ENCODE measurements at regions of chr12 and their contacts with region 1.

Region 1: GRCh38 chr12:56751712-56752598 is at the start of gene PRIM1:
- DNase-seq: peak; percentile 81
- ATAC-seq: peak; percentile 83
- H3K4me3 Mint-ChIP-seq: peak within 1 kb of the TSS; percentile 96
- H3K27ac Mint-ChIP-seq: peak within 1 kb of the TSS; percentile 94
- H3K4me1 Mint-ChIP-seq: peaks cover 43% of the 10 kb centered on the region
- H3K27me3 Mint-ChIP-seq: no peaks in the 10 kb centered on the region
- CTCF ChIP-seq: no peak
- total RNA-seq, gene PRIM1: 15.1 and 16.8 TPM in 2 replicates

Region 2: DNA sequence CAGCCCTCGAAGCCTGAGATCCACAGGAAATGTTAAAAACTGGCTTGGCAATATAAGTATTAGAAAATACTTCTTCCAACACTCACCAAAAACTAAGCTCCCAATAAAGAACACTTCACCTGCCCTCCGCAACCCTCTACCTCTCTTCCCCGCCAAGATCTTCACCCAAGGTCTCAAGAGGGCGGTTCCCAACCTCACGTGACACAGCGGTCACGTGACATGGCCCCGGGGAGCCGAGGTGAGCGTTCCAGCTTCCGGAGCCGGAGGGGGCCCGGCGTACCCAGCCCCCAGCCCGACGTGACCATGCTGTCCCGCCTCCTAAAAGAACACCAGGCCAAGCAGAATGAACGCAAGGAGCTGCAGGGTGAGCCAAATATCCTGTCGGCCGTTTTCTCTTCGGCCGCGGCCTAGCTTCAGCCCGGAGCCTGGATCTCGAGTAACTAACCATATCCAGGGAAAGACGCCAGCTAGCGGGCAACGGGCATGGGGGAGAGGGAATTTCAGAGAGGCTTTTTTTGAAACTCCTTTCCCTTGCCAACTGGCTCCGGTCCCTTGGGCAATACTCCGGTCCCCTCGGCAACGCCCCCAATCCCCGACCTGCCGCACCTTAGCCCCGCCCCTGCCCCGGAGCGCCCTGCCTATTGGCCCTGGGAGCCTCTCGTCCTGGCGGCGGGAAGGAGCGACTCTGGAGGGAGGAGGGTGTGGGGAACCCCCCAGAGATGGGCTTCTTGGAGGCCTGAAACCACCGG is 1035.9 kb before region 1 on chr12 and contains the start of gene BLOC1S1:
- CTCF ChIA-PET with region 1: no interaction called
- POLR2A ChIA-PET with region 1: no interaction called
- intact Hi-C with region 1: no loop called
- DNase-seq: peak; percentile 92
- ATAC-seq: peak; percentile 94
- H3K4me3 Mint-ChIP-seq: peak within 1 kb of the TSS; percentile 92
- H3K27ac Mint-ChIP-seq: peak within 1 kb of the TSS; percentile 91
- H3K4me1 Mint-ChIP-seq: peaks cover 34% of the 10 kb centered on the region
- H3K27me3 Mint-ChIP-seq: peaks cover 2% of the 10 kb centered on the region
- CTCF ChIP-seq: no peak
- total RNA-seq, gene BLOC1S1: 91.0 and 104 TPM in 2 replicates

Region 3: GRCh38 chr12:56630160-56630632 is 121.8 kb before region 1 on chr12 and contains the start of gene BAZ2A:
- CTCF ChIA-PET with region 1: no interaction called
- POLR2A ChIA-PET with region 1: interaction called, 4 read pairs
- intact Hi-C with region 1: loop called (anchors 1 kb)
- DNase-seq: peak; percentile 74
- ATAC-seq: peak; percentile 62
- H3K4me3 Mint-ChIP-seq: peak within 1 kb of the TSS; percentile 96
- H3K27ac Mint-ChIP-seq: peak within 1 kb of the TSS; percentile 88
- H3K4me1 Mint-ChIP-seq: peaks cover 80% of the 10 kb centered on the region
- H3K27me3 Mint-ChIP-seq: no peaks in the 10 kb centered on the region
- CTCF ChIP-seq: no peak
- total RNA-seq, gene BAZ2A: 153 and 192 TPM in 2 replicates

Region 4: DNA sequence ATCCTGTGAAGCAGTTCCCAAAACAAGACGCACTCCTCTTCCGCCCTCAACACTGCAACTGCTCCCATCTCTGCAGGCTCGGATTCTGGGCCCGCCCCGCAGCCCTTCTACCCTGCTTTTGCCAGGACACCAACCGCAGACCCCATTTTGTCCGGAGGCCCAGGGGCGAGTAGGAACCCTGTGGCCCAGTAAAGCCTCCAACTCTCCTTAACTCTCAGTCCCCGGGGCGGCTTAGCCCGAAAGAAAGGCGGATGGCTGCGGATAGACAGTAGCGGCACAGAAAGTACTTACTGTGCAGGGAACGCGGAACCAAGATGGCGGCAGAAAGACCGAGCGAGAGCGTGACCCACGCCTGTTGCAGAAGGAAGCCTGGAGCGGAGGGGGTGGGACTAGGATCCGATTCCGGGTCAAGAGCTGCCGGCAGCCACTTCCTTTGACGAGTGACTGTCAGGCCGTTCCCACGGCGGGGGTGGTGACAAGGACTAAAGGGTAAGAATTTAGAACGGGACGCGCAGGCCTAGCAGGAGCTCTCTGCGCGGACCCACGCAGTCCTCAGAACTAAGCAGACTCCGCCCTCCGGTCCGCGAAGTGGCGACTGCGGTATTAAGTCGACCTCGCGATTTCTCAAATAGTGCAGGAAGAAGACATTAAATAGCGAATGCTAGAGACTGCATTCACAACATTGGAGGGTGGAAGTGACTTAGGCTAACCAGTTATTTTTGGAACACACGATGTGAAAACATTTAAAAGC is 26.8 kb before region 1 on chr12 and contains the start of gene NACA:
- CTCF ChIA-PET with region 1: no interaction called
- POLR2A ChIA-PET with region 1: interaction called, 19 read pairs
- intact Hi-C with region 1: loop called (anchors 1 kb)
- DNase-seq: peak; percentile 90
- ATAC-seq: peak; percentile 95
- H3K4me3 Mint-ChIP-seq: peak within 1 kb of the TSS; percentile 99
- H3K27ac Mint-ChIP-seq: peak within 1 kb of the TSS; percentile 98
- H3K4me1 Mint-ChIP-seq: peaks cover 52% of the 10 kb centered on the region
- H3K27me3 Mint-ChIP-seq: no peaks in the 10 kb centered on the region
- CTCF ChIP-seq: no peak
- total RNA-seq, gene NACA: 1,104 and 1,342 TPM in 2 replicates

Region 5: GRCh38 chr12:56987551-56988053 is 235.6 kb after region 1 on chr12:
- CTCF ChIA-PET with region 1: interaction called, 68 read pairs
- POLR2A ChIA-PET with region 1: interaction called, 4 read pairs
- intact Hi-C with region 1: loop called (anchors 1 kb)
- DNase-seq: peak; percentile 66
- ATAC-seq: peak; percentile 96
- H3K4me3 Mint-ChIP-seq: peak overlapping the region; percentile 35
- H3K27ac Mint-ChIP-seq: no peak overlapping the region
- H3K4me1 Mint-ChIP-seq: peaks cover 12% of the 10 kb centered on the region
- H3K27me3 Mint-ChIP-seq: peaks cover 6% of the 10 kb centered on the region
- CTCF ChIP-seq: peak; percentile 89

Region 6: GRCh38 chr12:57063991-57064685 is 312.2 kb after region 1 on chr12:
- CTCF ChIA-PET with region 1: interaction called, 3 read pairs
- POLR2A ChIA-PET with region 1: interaction called, 8 read pairs
- intact Hi-C with region 1: loop called (anchors 1 kb)
- DNase-seq: no peak
- ATAC-seq: peak; percentile 79
- H3K4me3 Mint-ChIP-seq: peak overlapping the region; percentile 83
- H3K27ac Mint-ChIP-seq: peak overlapping the region; percentile 92
- H3K4me1 Mint-ChIP-seq: peaks cover 37% of the 10 kb centered on the region
- H3K27me3 Mint-ChIP-seq: no peaks in the 10 kb centered on the region
- CTCF ChIP-seq: no peak

Region 7: GRCh38 chr12:57088459-57089248 is 336.7 kb after region 1 on chr12 and contains the start of gene NAB2:
- CTCF ChIA-PET with region 1: no interaction called
- POLR2A ChIA-PET with region 1: interaction called, 3 read pairs
- intact Hi-C with region 1: loop called (anchors 1 kb)
- DNase-seq: peak; percentile 89
- ATAC-seq: peak; percentile 66
- H3K4me3 Mint-ChIP-seq: peak within 1 kb of the TSS; percentile 91
- H3K27ac Mint-ChIP-seq: peak within 1 kb of the TSS; percentile 96
- H3K4me1 Mint-ChIP-seq: peaks cover 55% of the 10 kb centered on the region
- H3K27me3 Mint-ChIP-seq: no peaks in the 10 kb centered on the region
- CTCF ChIP-seq: no peak
- total RNA-seq, gene NAB2: 20.4 and 22.1 TPM in 2 replicates

Region 8: DNA sequence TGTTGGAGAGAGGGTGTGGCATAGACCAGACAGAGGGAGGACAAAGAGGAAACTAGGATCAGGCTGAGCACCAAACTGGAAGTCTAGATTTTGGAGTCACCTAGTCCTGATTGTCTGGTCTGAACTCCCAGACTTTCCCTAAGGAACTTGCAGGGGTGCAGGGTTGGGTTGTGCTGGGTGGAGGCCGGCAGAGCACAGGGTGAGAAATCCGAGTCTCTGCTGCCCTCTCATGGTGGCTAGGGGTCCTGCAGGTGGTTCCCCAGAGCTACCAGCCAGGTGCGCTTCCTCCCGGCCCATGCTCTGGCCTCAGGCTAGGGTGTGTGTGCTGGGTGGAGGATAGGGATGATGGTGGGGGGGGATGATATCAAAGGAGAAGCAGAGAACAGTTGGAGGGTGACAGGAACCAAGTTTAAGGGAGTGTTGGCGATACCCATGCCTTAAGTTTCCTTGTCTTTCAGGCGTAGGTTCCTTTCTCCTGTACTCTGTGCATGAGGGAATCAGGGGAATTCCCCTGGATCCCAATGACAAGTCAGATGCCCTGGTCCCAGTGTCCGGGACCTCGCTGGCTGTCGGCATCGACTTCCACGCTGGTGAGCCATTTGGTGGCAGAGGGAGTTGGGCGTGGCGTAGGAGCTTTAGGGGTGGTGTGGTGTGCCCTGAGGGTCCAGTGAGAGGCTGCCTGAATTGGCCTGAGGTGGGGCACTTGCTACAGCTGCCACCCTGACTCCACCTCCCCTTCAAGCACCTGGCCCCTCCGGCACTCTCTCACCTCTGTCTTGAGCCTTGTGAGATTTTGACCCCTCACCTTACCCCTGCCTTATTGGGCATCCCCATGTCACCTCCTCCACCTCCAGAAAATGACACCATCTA is 431.2 kb after region 1 on chr12:
- CTCF ChIA-PET with region 1: no interaction called
- POLR2A ChIA-PET with region 1: no interaction called
- intact Hi-C with region 1: loop called (anchors 2 kb)
- DNase-seq: peak; percentile 74
- ATAC-seq: peak; percentile 100
- H3K4me3 Mint-ChIP-seq: no peak overlapping the region
- H3K27ac Mint-ChIP-seq: peak overlapping the region; percentile 6
- H3K4me1 Mint-ChIP-seq: peaks cover 4% of the 10 kb centered on the region
- H3K27me3 Mint-ChIP-seq: peaks cover 1% of the 10 kb centered on the region
- CTCF ChIP-seq: no peak